Heart right ventricle (tissue), 16 donors: ENCODE measurements at regions of chr12 and their contacts with region 1.

Region 1: DNA sequence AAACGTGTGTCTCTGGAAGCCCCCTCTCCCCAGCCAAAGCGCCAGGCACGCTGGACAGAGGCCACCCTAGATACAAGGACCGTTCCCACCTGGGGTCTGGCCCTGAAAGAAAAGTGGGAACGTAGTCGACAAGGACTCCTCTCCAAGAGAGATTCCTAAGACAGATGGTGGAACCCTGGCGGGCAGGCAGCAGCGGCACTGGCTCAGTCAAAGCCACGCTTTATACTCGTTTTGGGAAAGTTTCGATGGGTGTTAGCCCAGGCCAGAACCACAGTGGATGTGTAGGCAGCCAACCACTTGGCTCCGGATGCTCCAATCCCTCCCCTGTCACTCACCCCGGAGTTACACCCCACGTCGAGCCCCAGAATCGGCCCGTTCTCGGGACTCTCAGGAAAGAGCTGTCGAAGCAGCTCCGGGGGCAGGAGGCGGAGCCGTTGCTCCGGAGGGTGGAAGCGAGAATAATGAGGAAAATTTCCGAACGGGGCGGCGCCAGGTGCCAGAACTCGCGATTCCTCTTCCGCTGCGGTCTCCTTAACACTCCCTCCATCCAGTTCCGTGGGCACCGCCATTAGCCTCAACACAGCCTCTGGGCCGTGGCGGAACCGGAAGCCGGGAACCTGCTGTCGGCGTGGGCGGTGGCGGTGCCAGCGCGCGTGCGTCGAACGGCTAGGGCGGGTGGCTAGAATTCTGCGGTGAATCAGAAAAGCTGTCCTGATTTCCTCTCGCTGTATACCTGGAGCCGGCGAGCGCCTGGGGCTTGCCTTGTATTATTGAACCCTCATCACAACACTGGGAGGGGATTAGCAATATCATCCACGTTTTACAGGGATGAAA is at the start of gene BCDIN3D:
- DNase-seq: peak; percentile 90 to 92
- ATAC-seq: peak; percentile 97 to 99 (median 98)
- H3K4me3 ChIP-seq: peak within 1 kb of the TSS; percentile 60 to 86 (median 72)
- H3K27ac ChIP-seq: peak within 1 kb of the TSS; percentile 62 to 95 (median 90)
- H3K4me1 ChIP-seq: peaks cover 3 to 24% (median 16%) of the 10 kb centered on the region in 9 donors
- H3K27me3 ChIP-seq: peaks cover 0 to 14% (median 0%) of the 10 kb centered on the region in 7 donors
- CTCF ChIP-seq: no peak
- total RNA-seq, gene BCDIN3D: 1.1 to 3.9 (median 2.4) TPM

Region 2: DNA sequence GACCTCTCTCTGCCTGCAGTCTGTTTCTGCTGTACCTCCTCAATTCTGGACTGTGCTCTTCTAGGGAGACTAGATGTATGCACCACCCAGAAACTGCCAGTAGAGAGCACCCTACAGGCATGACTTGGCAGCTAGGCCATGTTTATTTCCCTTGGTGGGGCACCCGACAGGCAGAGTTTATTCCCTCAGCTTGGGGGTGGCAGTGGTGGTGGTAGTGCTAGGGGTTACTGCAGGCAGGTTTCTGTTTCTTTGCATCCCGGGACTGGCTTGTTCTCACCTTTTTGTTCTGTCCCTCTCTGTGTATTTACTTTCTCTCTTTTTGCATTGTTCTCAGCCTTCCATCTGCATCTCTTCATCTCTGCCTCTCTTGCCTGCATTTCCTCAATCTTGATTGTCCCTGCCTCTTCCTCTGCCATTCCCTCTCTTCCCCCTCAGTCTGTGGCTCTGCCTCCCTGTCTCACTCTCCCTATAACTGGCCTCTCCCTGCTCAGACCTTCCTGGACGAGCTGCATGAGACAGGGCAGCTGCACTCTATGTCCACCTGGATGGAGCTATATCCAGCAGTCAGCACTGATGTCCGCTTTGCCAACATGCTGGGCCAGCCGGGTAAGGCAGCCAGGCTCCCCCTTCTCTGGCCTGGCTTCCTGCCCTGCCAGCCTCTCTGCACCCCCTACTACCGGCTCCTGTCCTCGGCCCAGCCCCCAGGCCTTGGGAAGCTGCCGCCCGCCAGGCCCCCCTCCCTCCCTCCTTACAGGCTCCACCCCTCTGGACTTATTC is 205.6 kb before region 1 on chr12:
- intact Hi-C with region 1: loop called in 2 of 10 experiments (anchors 10 kb)
- DNase-seq: peak in 1 of 2 donors; percentile 66
- ATAC-seq: peak; percentile 66 to 81 (median 76)
- H3K4me3 ChIP-seq: no peak overlapping the region
- H3K27ac ChIP-seq: peak overlapping the region in 5 of 10 donors; percentile 11 to 51 (median 32)
- H3K4me1 ChIP-seq: peaks cover 5 to 22% (median 14%) of the 10 kb centered on the region in 9 donors
- H3K27me3 ChIP-seq: no peaks in the 10 kb centered on the region
- CTCF ChIP-seq: peak; percentile 47 to 76 (median 66)

Region 3: GRCh38 chr12:49644620-49644994 is 198.1 kb before region 1 on chr12:
- intact Hi-C with region 1: loop called in 2 of 10 experiments (anchors 10 kb)
- DNase-seq: peak; percentile 80 to 88
- ATAC-seq: peak; percentile 71 to 87 (median 82)
- H3K4me3 ChIP-seq: no peak overlapping the region
- H3K27ac ChIP-seq: peak overlapping the region in 6 of 10 donors; percentile 35 to 90 (median 46)
- H3K4me1 ChIP-seq: peaks cover 16 to 59% (median 50%) of the 10 kb centered on the region in 9 donors
- H3K27me3 ChIP-seq: no peaks in the 10 kb centered on the region
- CTCF ChIP-seq: peak in 8 of 9 donors; percentile 92 to 98 (median 96)

Region 4: DNA sequence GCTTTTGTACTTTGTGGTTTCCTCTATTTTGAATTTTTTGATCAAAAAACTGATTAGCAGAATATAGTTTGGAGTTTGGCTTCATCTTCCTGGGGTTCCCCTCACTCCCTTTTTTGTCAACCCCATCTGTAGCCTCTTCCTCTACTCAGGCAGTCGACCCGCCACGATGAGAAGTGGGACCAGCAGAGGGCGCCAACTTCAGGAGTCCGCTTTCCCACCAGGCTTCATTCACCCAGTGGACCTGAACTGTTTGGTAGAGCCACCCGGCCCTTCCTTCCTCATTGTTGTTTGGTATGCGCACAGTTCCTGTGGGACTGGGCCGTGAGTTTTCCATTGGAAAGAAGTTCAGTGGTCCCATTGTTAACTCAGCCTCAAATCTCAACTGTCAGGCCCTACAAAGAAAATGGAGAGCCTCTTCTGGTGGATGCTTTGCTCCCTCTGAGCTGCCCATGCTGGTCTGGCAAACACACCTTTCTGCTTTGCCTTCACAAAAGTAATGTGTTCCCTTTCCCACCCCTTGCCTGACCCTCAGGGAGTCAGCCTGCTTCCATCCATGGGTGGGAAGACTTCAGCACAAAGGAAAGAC is 79.6 kb before region 1 on chr12:
- intact Hi-C with region 1: loop called in 1 of 10 experiments (anchors 5 kb)
- DNase-seq: peak; percentile 79
- ATAC-seq: peak; percentile 56 to 87 (median 80)
- H3K4me3 ChIP-seq: no peak overlapping the region
- H3K27ac ChIP-seq: peak overlapping the region in 9 of 10 donors; percentile 20 to 72 (median 46)
- H3K4me1 ChIP-seq: peaks cover 0 to 28% (median 9%) of the 10 kb centered on the region in 9 donors
- H3K27me3 ChIP-seq: no peaks in the 10 kb centered on the region
- CTCF ChIP-seq: peak; percentile 52 to 83 (median 79)

Region 5: DNA sequence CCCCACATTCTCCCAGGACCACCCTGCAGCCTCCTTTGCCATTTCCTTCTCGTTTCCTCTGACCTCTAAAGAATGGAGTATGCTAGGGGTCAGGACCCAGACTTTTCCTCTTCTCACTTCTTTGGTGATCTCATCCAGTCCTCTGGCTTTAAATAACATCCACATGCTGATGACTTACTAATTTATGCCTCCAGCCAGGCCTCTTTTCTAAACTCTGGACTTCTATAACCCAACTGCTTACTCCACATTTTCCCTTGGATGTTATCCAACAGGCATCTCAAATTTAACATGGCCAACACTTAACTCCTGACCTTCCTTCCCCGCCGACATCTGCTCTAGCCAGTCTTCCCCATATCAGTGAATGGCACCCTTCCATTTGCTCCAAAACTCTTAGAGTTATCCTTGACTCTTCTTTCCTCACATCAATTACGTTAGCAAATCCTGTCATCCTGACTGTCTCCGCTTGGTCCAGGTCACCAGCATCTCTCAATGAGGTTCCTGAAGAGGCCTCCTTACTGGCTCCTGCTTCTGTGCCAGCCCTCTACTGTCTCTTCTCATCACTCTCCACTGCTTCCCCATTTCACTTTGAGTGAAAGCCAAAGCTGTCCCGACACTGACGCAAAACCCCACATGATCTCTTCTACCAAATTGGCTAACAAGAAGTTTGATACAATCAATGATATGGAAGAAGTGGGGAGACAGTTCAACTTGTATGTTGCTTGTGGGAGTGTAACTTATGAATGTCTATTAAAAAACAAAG is 58.6 kb before region 1 on chr12:
- intact Hi-C with region 1: loop called in 2 of 10 experiments (anchors 5 kb)
- DNase-seq: no peak
- ATAC-seq: peak; percentile 41 to 79 (median 65)
- H3K4me3 ChIP-seq: no peak overlapping the region
- H3K27ac ChIP-seq: peak overlapping the region in 4 of 10 donors; percentile 15 to 76 (median 58)
- H3K4me1 ChIP-seq: peaks cover 0 to 23% (median 18%) of the 10 kb centered on the region in 9 donors
- H3K27me3 ChIP-seq: no peaks in the 10 kb centered on the region
- CTCF ChIP-seq: no peak

Region 6: GRCh38 chr12:49828133-49829091 is 14.3 kb before region 1 on chr12 and contains the start of gene NCKAP5L:
- intact Hi-C with region 1: loop called in 1 of 10 experiments (anchors 2 kb)
- DNase-seq: peak; percentile 97 to 98
- ATAC-seq: peak; percentile 96 to 98 (median 97)
- H3K4me3 ChIP-seq: peak within 1 kb of the TSS; percentile 78 to 92 (median 89)
- H3K27ac ChIP-seq: peak within 1 kb of the TSS; percentile 83 to 97 (median 93)
- H3K4me1 ChIP-seq: peaks cover 17 to 53% (median 47%) of the 10 kb centered on the region in 9 donors
- H3K27me3 ChIP-seq: no peaks in the 10 kb centered on the region
- CTCF ChIP-seq: no peak
- total RNA-seq, gene NCKAP5L: 17.3 to 32.1 (median 23.7) TPM

Region 7: GRCh38 chr12:49866859-49867579 is 24.3 kb after region 1 on chr12:
- intact Hi-C with region 1: no loop called
- DNase-seq: peak; percentile 72 to 77
- ATAC-seq: peak in 7 of 8 donors; percentile 4 to 40 (median 20)
- H3K4me3 ChIP-seq: no peak overlapping the region
- H3K27ac ChIP-seq: peak overlapping the region in 1 of 10 donors; percentile 67
- H3K4me1 ChIP-seq: peaks cover 22 to 40% (median 30%) of the 10 kb centered on the region in 9 donors
- H3K27me3 ChIP-seq: peaks cover 0 to 15% (median 6%) of the 10 kb centered on the region in 7 donors
- CTCF ChIP-seq: peak; percentile 95 to 99 (median 97)

Region 8: DNA sequence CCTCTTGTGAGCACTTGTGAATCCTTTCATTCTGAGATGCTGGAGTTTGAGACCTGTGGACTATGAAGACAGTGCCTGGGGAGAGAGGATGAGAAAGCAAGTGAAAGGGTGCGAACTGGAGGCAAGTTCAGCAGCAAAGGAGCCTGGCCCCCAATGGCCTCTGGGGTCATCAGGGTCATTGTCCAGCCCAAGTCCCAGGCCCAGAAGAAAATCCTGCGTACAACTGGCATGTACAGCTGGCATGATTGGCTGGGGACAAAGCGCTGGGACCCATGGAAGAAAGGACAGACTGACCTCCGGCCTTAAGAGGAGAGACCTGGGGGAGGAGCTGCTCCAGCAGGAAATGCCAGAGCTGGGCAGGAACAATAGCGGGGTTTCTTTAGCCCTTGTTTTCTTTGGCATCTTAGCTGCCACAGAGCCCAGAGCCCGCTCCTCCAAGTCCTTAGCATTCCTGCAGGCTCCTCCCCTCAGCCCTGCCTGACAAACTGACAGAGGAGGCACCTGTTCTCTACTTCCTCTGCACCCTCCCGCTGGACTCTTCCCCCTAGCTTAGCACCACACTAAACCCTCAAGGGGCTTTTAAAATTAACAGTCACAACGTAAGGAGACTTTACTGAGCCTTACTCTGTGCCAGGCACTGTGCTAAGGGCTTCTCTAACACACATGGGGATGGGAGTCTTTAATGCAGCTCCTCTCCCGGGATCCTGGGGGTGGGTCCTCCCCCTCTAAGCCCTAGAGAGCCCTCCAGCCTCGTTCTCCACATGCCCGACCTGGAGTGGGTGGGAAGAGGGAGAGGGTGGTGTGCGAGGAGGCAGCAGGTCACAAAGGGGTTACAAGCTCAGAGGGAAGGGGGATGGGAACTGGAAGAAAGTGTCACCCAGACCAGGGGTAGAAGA is 117.1 kb after region 1 on chr12:
- intact Hi-C with region 1: no loop called
- DNase-seq: no peak
- ATAC-seq: peak in 1 of 8 donors; percentile 14
- H3K4me3 ChIP-seq: no peak overlapping the region
- H3K27ac ChIP-seq: no peak overlapping the region
- H3K4me1 ChIP-seq: peaks cover 3 to 46% (median 12%) of the 10 kb centered on the region in 9 donors
- H3K27me3 ChIP-seq: peaks cover 0 to 97% (median 56%) of the 10 kb centered on the region in 7 donors
- CTCF ChIP-seq: no peak